ENCODE measurements at regions of chr16 and their contacts with region 1.

Region 1: DNA sequence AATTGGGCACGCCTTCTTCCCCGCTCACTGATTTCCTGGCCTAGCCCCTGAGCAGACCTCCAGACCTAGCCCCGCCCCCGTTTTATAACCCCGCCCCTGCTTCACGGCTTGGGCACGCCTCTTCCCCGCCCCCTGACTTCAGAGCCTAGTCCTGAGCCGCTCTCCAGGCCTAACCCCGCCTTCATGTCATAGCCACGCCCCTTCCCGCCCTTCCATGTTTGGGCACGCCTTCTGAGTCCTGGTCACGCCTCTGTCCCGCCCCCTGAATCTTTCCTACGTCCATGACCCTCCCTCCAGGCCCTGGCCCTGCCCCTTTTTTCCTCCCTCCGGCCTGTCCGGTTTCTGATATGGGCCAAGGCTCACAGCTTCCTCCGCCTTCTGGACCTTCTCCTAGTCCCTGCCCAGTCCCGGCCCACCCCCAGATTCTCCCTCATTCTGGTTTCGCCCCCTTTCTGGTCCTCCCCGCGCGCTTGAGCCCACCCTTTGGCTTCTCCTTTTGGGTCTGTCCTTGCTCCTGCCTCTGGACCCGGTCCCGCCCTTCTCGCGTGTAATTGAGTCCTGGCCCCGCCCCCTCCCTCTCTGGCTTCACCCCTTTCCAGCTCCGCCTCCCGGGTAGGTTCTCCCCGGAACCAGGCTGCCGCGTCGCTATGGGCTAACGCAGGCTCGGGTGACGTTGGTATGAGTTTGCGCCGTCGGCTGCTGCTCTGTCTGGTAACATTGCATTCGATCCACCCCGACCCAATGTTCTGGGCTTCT is 15.1 kb upstream of the EEF2K start:
- DNase-seq: peak; percentile 100
- H3K4me3 Mint-ChIP-seq: peak overlapping the region; percentile 91
- H3K27ac Mint-ChIP-seq: peak overlapping the region; percentile 99
- H3K4me1 Mint-ChIP-seq: peaks cover 56% of the 10 kb centered on the region
- H3K27me3 Mint-ChIP-seq: peaks cover 3% of the 10 kb centered on the region

Region 2: GRCh38 chr16:20741554-20742285 is 1449.2 kb before region 1 on chr16 and contains the start of gene THUMPD1:
- intact Hi-C with region 1: loop called (anchors 2 kb)
- DNase-seq: peak; percentile 98
- H3K4me3 Mint-ChIP-seq: peak within 1 kb of the TSS; percentile 95
- H3K27ac Mint-ChIP-seq: peak within 1 kb of the TSS; percentile 94
- H3K4me1 Mint-ChIP-seq: peaks cover 14% of the 10 kb centered on the region
- H3K27me3 Mint-ChIP-seq: no peaks in the 10 kb centered on the region
- total RNA-seq, gene THUMPD1: 44.7 and 47.4 TPM in 2 replicates

Region 3: DNA sequence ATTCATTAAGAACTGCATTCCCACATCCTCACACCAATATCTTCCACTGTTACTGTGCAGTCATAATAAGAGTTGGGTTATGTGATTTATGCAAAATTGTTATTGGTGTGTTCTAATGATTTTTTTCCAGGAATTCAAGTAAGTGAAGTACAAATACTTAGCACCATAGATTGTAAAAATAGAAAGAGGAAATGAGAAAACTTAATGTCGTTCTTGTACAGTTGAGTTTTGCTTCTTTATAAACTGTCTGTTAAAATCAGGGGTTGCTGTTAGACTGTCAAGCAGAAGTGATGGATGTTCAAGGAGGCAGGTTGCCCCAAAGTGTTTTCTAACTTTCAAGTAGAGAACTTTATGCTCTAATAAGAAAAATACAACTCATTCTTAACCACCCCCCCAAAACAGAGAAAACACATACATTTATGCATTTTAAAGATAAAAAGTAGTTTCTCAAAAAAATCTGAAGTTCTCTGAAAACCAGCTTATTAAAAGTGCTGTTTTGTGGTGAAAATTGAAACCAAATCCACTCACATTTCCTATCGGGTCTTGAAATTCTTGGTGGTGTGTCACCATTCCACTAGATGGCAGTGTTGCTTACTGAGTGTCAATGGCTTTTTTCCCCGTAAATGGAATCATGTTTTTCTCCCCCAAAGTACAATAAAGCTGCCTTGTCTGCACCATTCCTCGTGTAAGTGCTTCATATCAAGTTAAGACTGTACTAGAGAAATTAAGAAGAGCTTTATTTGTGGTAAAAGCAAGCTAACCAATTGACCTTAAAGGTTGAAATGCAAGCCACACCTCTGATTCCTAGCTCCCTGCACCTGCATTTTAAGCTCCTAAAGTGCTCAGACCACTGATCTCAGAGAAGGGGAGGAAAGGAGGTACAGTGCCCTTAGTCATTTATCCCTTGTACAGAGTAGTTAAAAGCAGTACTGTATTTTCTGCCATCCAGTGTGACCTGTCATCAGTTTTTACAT is 533.9 kb before region 1 on chr16:
- intact Hi-C with region 1: loop called (anchors 5 kb)
- DNase-seq: peak; percentile 86
- H3K4me3 Mint-ChIP-seq: peak overlapping the region; percentile 26
- H3K27ac Mint-ChIP-seq: no peak overlapping the region
- H3K4me1 Mint-ChIP-seq: peaks cover 39% of the 10 kb centered on the region
- H3K27me3 Mint-ChIP-seq: no peaks in the 10 kb centered on the region

Region 4: DNA sequence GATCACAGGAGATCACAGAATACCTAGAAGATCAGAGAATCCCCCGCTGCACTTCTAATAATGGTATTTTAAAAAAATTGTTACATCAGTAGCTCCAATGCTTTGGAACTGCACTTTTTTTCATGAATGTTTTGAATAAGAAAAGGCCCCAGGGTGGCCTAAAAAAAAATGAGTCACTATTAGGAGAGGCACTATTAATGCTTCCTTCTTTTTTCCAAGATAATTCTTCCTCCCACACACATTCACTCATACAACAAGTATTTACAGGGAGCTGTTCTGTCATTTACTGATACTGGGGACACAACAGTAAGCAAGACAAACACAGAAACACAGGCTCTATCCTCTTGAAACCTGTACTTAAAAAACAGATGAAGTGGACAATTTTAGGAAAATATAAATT is 189.4 kb before region 1 on chr16:
- intact Hi-C with region 1: loop called (anchors 1 kb)
- DNase-seq: no peak
- H3K4me3 Mint-ChIP-seq: no peak overlapping the region
- H3K27ac Mint-ChIP-seq: no peak overlapping the region
- H3K4me1 Mint-ChIP-seq: peaks cover 7% of the 10 kb centered on the region
- H3K27me3 Mint-ChIP-seq: peaks cover 2% of the 10 kb centered on the region

Region 5: DNA sequence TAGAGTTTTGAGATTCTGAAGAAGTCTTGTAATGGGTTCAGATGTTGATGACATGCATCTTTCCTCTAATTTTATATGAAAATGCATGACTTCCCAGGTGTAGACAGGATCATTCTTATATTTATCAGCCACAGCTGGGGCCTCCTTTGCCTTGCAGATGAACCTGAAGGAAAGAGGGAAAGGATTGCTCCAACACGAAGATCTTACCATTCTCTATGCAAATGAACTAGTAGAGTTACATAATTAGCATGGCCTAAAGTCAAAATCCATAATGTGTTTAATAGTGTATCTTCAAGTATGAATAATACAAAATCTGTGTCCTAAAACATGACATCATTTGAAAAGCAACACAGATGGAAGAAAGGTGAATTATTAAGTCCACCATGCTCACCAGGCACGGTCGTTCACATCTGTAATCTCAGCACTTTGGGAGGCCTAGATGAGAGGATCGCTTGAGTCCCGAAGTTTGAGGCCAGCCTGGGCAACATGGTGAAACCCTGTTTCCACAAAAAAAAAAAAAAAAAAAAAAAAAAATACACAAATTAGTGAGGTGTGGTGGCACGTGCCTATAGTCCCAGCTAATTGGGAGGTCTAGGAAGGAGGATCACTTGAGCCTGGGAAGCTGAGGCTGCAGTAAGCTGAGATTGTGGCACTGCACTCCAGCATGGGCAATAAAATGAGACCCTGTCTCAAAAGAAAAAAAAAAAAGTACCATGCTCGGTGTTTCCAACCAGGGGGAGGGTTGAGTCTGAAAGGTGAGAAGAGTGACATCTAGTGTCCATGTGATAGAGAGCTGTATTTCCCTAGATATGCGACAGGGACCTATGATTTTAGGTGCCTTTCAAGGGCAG is 92.3 kb before region 1 on chr16:
- intact Hi-C with region 1: loop called (anchors 1 kb)
- DNase-seq: peak; percentile 71
- H3K4me3 Mint-ChIP-seq: no peak overlapping the region
- H3K27ac Mint-ChIP-seq: no peak overlapping the region
- H3K4me1 Mint-ChIP-seq: no peaks in the 10 kb centered on the region
- H3K27me3 Mint-ChIP-seq: peaks cover 10% of the 10 kb centered on the region

Region 6: GRCh38 chr16:22297114-22297878 is 106.3 kb after region 1 on chr16 and contains the start of gene POLR3E:
- intact Hi-C with region 1: loop called (anchors 1 kb)
- DNase-seq: peak; percentile 100
- H3K4me3 Mint-ChIP-seq: peak within 1 kb of the TSS; percentile 94
- H3K27ac Mint-ChIP-seq: peak within 1 kb of the TSS; percentile 97
- H3K4me1 Mint-ChIP-seq: peaks cover 33% of the 10 kb centered on the region
- H3K27me3 Mint-ChIP-seq: no peaks in the 10 kb centered on the region
- total RNA-seq, gene POLR3E: 102 and 111 TPM in 2 replicates

Measured in activated CD4-positive, alpha-beta T cell treated with anti-CD3 and anti-CD28 coated beads, Interleukin-2, amount 10 ng/mL, durations not matched to agents 24 days and 14 days (primary cell).